HEK293 (cell line): ENCODE measurements at regions of chr7 and their contacts with region 1.

Region 1: GRCh38 chr7:89622838-89623672 is 531.2 kb upstream of the STEAP1 start:
- H3K4me3 ChIP-seq: no peak overlapping the region
- H3K27ac ChIP-seq: no peak overlapping the region
- H3K4me1 ChIP-seq: no peaks in the 10 kb centered on the region
- CTCF ChIP-seq: no peak

Region 2: DNA sequence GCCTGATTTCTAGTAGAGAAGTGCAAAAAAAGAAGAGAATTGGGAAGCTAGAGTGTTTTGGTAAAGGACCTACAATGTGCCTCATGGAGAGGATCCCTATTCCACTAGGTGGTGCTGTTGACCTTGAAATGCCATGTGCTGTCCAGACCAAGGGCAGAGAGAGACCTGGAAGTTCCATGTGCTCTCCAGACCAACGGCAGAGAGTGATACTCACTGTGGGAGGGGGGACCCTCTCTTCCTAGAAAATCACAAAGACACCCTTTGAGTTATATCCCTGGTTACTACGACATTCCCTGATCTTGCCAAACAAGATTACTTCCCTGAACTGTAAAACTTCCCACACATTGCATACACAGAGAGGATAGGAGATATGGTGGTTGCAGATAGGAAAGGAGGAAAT is 1076.2 kb before region 1 on chr7:
- CTCF ChIA-PET with region 1: interaction called, 12 read pairs
- POLR2A ChIA-PET with region 1: no interaction called
- H3K4me3 ChIP-seq: no peak overlapping the region
- H3K27ac ChIP-seq: no peak overlapping the region
- H3K4me1 ChIP-seq: no peaks in the 10 kb centered on the region
- CTCF ChIP-seq: no peak; the same call in 1 of the 2 replicates

Region 3: GRCh38 chr7:89607792-89608191 is 15.3 kb before region 1 on chr7:
- CTCF ChIA-PET with region 1: interaction called, 12 read pairs
- POLR2A ChIA-PET with region 1: no interaction called
- H3K4me3 ChIP-seq: no peak overlapping the region
- H3K27ac ChIP-seq: no peak overlapping the region
- H3K4me1 ChIP-seq: no peaks in the 10 kb centered on the region; the same call in 1 of the 2 replicates
- CTCF ChIP-seq: no peak